ENCODE measurements at regions of chr12 and their contacts with region 1.

Region 1: GRCh38 chr12:67710582-67710981 is 62.0 kb downstream of the DYRK2 start:
- DNase-seq: peak; percentile 79 to 86
- H3K4me3 ChIP-seq: no peak overlapping the region
- H3K4me3 Mint-ChIP-seq: peak overlapping the region; percentile 59
- H3K27ac Mint-ChIP-seq: peak overlapping the region; percentile 90
- H3K4me1 ChIP-seq: peaks cover 44% of the 10 kb centered on the region
- H3K4me1 Mint-ChIP-seq: peaks cover 37% of the 10 kb centered on the region
- H3K27me3 ChIP-seq: no peaks in the 10 kb centered on the region
- H3K27me3 Mint-ChIP-seq: no peaks in the 10 kb centered on the region
- CTCF ChIP-seq: no peak

Region 2: GRCh38 chr12:67648521-67649260 is 61.9 kb before region 1 on chr12 and contains the start of gene DYRK2:
- CTCF ChIA-PET with region 1: no interaction called
- POLR2A ChIA-PET with region 1: no interaction called
- intact Hi-C with region 1: loop called (anchors 2 kb)
- DNase-seq: peak; percentile 74 to 82
- H3K4me3 ChIP-seq: peak within 1 kb of the TSS; percentile 75
- H3K4me3 Mint-ChIP-seq: peak within 1 kb of the TSS; percentile 79
- H3K27ac Mint-ChIP-seq: peak within 1 kb of the TSS; percentile 93
- H3K4me1 ChIP-seq: peaks cover 24% of the 10 kb centered on the region; the same call in 1 of the 2 replicates
- H3K4me1 Mint-ChIP-seq: peaks cover 14% of the 10 kb centered on the region
- H3K27me3 ChIP-seq: no peaks in the 10 kb centered on the region
- H3K27me3 Mint-ChIP-seq: no peaks in the 10 kb centered on the region
- CTCF ChIP-seq: peak in 1 of 2 experiments; percentile 8
- total RNA-seq, gene DYRK2: 24.4 and 24.6 TPM in 2 replicates

Region 3: DNA sequence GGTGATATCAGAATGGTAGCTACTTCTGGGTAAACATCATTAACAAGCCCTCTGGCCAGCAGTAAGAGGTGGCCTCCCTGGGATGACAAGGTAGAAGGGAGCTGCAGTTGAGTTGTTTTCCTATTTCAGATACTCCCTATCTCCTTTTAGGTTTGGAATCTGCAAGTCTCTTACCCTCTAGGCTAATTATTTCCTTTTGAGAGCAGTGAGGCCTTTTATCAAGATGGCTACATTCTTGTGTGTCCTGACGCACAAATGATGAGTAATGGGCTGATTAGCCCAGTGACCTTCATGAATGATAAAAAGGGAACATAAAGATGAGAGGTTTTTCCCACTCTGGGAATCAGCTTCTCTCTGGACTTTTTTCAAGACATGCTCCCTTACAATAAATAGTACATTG is 39.2 kb before region 1 on chr12:
- CTCF ChIA-PET with region 1: no interaction called
- POLR2A ChIA-PET with region 1: no interaction called
- intact Hi-C with region 1: no loop called
- DNase-seq: peak in 1 of 2 experiments; percentile 10
- H3K4me3 ChIP-seq: no peak overlapping the region
- H3K4me3 Mint-ChIP-seq: no peak overlapping the region
- H3K27ac Mint-ChIP-seq: no peak overlapping the region
- H3K4me1 ChIP-seq: peaks cover 20% of the 10 kb centered on the region
- H3K4me1 Mint-ChIP-seq: no peaks in the 10 kb centered on the region
- H3K27me3 ChIP-seq: no peaks in the 10 kb centered on the region
- H3K27me3 Mint-ChIP-seq: no peaks in the 10 kb centered on the region
- CTCF ChIP-seq: no peak

Region 4: DNA sequence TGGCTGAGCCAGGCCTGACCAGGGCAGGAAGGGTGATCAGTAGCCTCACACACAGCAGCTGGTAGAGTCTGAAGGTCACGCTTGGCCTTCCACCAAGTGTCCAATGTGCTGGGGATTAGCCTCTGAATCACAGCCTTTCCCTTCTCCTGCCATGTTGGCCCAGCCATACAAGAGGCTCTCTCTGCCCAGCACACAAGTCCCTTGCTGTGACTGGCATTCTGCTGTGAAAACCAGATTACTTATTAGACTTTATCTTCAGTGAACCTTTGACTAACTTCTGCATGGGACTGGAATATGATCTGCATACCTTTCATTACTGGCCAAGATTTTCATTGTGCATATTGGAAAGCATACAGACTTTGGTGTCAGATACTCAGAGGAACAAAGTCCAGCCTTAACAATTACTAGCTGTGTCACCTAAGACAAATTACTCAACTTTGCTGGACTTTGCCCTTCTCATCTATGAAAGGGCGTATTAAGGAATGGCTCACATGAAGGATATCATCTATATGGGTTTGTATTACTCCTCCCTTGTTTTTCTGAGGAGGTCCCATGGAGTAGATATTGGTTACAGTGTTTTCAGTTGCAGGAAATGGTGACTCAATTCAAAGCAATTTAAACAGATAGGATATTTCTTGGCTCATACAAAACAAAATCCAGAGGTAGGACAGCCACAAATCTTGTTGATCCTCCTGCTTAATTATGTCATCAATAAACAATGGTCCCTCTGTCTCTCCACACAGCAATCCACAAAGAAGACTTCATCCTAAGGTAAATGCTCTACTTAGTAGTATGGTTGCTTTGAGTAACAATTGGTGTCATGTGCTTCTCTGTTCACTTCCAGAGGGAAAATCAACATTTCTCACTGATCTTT is 37.5 kb after region 1 on chr12:
- CTCF ChIA-PET with region 1: no interaction called
- POLR2A ChIA-PET with region 1: no interaction called
- intact Hi-C with region 1: loop called (anchors 1 kb)
- DNase-seq: peak; percentile 54 to 78
- H3K4me3 ChIP-seq: no peak overlapping the region
- H3K4me3 Mint-ChIP-seq: peak overlapping the region; percentile 59
- H3K27ac Mint-ChIP-seq: peak overlapping the region; percentile 94
- H3K4me1 ChIP-seq: peaks cover 39% of the 10 kb centered on the region
- H3K4me1 Mint-ChIP-seq: peaks cover 30% of the 10 kb centered on the region
- H3K27me3 ChIP-seq: no peaks in the 10 kb centered on the region
- H3K27me3 Mint-ChIP-seq: no peaks in the 10 kb centered on the region
- CTCF ChIP-seq: peak in 1 of 2 experiments; percentile 16

Region 5: GRCh38 chr12:67784831-67785230 is 74.2 kb after region 1 on chr12:
- CTCF ChIA-PET with region 1: no interaction called
- POLR2A ChIA-PET with region 1: no interaction called
- intact Hi-C with region 1: loop called (anchors 2 kb)
- DNase-seq: no peak
- H3K4me3 ChIP-seq: no peak overlapping the region
- H3K4me3 Mint-ChIP-seq: no peak overlapping the region
- H3K27ac Mint-ChIP-seq: no peak overlapping the region
- H3K4me1 ChIP-seq: peaks cover 5% of the 10 kb centered on the region; the same call in 1 of the 2 replicates
- H3K4me1 Mint-ChIP-seq: no peaks in the 10 kb centered on the region
- H3K27me3 ChIP-seq: no peaks in the 10 kb centered on the region
- H3K27me3 Mint-ChIP-seq: peaks cover 3% of the 10 kb centered on the region
- CTCF ChIP-seq: no peak